Stomach (tissue), 19 donors: ENCODE measurements at regions of chr1 and their contacts with region 1.

Region 1: GRCh38 chr1:225777583-225778336 is at the start of gene SRP9:
- DNase-seq: peak; percentile 99 to 100
- H3K4me3 ChIP-seq: peak within 1 kb of the TSS; percentile 63 to 78 (median 68)
- H3K27ac ChIP-seq: peak within 1 kb of the TSS; percentile 91 to 97 (median 93)
- H3K4me1 ChIP-seq: peaks cover 26 to 88% (median 59%) of the 10 kb centered on the region in 4 donors
- H3K27me3 ChIP-seq: no peaks in the 10 kb centered on the region
- CTCF ChIP-seq: peak in 6 of 7 experiments; percentile 13 to 95 (median 82)
- EP300 ChIP-seq: no peak
- POLR2A ChIP-seq: peak in 2 of 4 donors; percentile 39 to 56
- total RNA-seq, gene SRP9: 68.9 to 269 (median 130) TPM

Region 2: GRCh38 chr1:225567590-225568194 is 210.1 kb before region 1 on chr1:
- intact Hi-C with region 1: no loop called
- DNase-seq: no peak
- H3K4me3 ChIP-seq: no peak overlapping the region
- H3K27ac ChIP-seq: no peak overlapping the region
- H3K4me1 ChIP-seq: peaks cover 0 to 51% (median 27%) of the 10 kb centered on the region in 4 donors
- H3K27me3 ChIP-seq: no peaks in the 10 kb centered on the region
- CTCF ChIP-seq: peak in 1 of 7 experiments; percentile 11
- EP300 ChIP-seq: no peak
- POLR2A ChIP-seq: no peak

Region 3: GRCh38 chr1:225866061-225866837 is 88.5 kb after region 1 on chr1:
- intact Hi-C with region 1: loop called (anchors 10 kb)
- DNase-seq: peak in 1 of 2 donors; percentile 57
- H3K4me3 ChIP-seq: no peak overlapping the region
- H3K27ac ChIP-seq: peak overlapping the region in 3 of 5 donors; percentile 6 to 44 (median 34)
- H3K4me1 ChIP-seq: peaks cover 6 to 37% (median 21%) of the 10 kb centered on the region in 4 donors
- H3K27me3 ChIP-seq: no peaks in the 10 kb centered on the region
- CTCF ChIP-seq: no peak
- EP300 ChIP-seq: no peak
- POLR2A ChIP-seq: no peak

Region 4: DNA sequence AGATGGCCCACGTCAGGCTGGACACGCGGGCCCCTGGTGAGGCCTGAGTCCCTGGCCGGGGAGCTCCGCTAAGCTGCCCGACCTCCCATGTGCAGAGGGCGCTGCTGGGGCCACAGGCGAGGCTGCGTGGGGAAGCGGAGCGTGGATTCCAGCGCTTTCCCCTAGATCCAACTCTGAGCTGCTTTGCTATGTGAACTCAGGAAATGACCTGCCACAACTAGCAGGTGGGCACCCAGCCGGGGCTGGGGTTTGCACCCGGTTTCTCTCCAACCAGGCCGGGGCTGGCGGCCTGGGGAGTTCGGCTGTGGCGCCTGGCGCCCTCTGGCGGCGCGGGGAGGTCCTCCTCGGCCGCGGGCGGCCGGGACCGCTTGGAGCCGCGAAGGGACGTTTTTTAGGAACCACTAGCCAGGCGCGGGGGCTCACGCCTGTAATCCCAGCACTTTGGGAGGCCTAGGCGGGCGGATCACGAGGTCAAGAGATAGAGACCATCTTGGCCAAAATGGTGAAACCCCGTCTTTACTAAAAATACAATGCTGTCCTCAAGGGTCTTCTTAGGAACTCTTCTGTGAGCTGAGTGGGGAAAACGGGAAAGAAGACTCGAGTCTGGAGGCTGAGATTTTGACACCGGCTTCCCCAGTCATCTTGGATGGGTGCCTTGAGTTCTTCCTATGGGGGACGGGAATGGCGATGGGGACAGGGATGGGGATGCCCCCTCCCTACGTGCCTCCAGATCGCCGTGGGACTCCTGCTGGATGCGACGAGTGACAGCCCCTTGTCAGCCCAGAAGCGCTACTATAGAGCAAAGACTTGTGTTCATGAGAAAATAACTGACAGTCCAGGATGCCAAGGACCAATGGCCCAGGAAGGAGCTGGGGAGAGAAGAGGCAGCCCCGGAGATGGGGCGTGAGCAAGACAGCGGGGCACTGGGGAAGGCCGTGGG is 133.7 kb after region 1 on chr1:
- intact Hi-C with region 1: loop called (anchors 10 kb)
- DNase-seq: peak; percentile 78 to 88
- H3K4me3 ChIP-seq: no peak overlapping the region
- H3K27ac ChIP-seq: peak overlapping the region in 2 of 5 donors; percentile 2 to 8
- H3K4me1 ChIP-seq: peaks cover 0 to 41% (median 15%) of the 10 kb centered on the region in 4 donors
- H3K27me3 ChIP-seq: no peaks in the 10 kb centered on the region
- CTCF ChIP-seq: peak in 5 of 7 experiments; percentile 78 to 94 (median 88)
- EP300 ChIP-seq: no peak
- POLR2A ChIP-seq: no peak

Region 5: DNA sequence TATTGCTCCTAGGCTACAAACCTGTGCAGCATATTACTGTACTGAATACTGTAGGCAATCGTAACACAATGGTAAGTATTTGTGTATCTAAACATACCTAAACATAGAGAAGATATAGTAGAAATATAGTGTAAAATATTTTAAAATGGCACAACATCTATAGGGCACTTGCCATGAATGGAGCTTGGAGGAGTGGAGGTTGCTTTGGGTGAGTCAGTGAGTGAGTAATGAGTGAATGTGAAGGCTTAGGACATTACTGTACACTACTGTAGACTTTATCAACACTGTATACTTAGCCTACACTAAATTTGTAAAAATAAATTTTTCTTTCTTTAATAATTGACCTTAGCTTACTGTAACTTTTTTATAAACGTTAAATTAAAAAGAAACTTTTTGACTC is 155.3 kb after region 1 on chr1:
- intact Hi-C with region 1: no loop called
- DNase-seq: no peak
- H3K4me3 ChIP-seq: no peak overlapping the region
- H3K27ac ChIP-seq: no peak overlapping the region
- H3K4me1 ChIP-seq: no peaks in the 10 kb centered on the region
- H3K27me3 ChIP-seq: no peaks in the 10 kb centered on the region
- CTCF ChIP-seq: no peak
- EP300 ChIP-seq: no peak
- POLR2A ChIP-seq: no peak